Activated CD4-positive, alpha-beta memory T cell treated with anti-CD3 and anti-CD28 coated beads for 36 hours (primary cell): ENCODE measurements at regions of chr19 and their contacts with region 1.

Region 1: DNA sequence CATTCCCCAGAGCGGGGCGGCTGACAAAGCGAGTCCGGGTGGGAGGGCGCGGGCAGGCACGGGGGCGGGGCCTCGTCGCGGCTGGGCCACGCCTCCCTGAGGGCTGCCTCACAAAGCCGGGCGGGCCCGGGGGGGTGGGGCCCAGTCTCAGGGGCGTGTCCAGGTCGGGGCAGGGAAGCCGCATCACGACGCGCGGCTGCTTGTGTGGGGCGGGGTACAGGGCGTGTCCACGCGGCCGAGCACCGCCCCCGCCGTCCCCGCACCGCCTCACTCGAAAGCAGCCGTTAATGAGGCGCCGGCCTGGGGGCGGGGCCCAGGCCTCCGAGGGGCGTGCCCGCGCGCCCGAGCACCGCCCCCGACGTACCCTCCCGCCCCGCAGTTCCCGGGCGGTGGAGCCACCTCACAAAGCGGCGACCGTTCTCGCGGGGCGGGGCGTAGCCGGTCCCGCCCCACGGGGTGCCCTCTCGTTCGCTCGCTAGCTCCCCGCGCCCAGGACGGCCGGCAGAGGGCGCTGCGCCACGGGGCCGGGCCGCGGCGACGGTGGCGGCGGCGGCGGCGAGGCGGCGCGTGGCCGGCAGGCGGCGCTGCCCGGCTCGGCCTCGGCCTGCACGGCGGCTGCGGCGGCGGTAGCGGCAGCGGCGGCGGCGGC is at the start of gene CARM1:
- DNase-seq: peak; percentile 99
- H3K4me3 Mint-ChIP-seq: peak within 1 kb of the TSS; percentile 79
- H3K27ac Mint-ChIP-seq: peak within 1 kb of the TSS; percentile 96
- H3K4me1 Mint-ChIP-seq: peaks cover 25% of the 10 kb centered on the region
- H3K27me3 Mint-ChIP-seq: no peaks in the 10 kb centered on the region
- total RNA-seq, gene CARM1: 75.0 to 78.3 TPM

Region 2: DNA sequence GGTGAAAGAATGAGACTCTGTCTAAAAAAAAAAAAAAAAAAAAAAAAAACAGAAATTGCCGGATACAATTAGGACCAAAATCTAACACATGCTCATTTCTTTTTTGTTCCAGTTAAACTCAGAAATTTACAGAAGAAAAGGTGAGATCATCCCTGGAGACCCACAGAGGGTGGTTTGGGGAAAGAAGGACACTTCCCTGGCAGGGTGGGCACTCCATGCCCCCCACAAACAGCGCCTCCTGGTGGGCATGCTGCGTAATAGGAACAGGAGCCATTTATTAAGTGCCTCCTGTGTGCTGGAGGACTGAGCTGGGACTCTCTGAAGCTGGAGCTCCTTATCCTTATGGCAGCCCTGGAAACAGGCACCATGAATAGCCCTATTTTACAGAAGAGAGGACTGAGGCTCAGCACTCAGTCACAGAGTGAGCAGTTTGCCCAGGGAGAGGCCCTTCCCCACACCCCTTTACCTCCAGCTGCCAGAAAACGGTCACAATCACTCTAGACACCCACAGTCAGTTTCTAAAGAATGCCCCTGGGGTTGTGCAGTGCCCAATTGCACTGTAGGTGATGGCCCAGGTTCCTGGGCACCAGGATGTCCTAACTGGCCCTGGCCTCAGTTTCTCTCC is 12.8 kb before region 1 on chr19:
- CTCF ChIA-PET with region 1: interaction called, 21 read pairs
- POLR2A ChIA-PET with region 1: no interaction called
- intact Hi-C with region 1: no loop called
- DNase-seq: peak; percentile 47
- H3K4me3 Mint-ChIP-seq: no peak overlapping the region
- H3K27ac Mint-ChIP-seq: no peak overlapping the region
- H3K4me1 Mint-ChIP-seq: peaks cover 4% of the 10 kb centered on the region
- H3K27me3 Mint-ChIP-seq: no peaks in the 10 kb centered on the region

Region 3: GRCh38 chr19:11096210-11096841 is 225.2 kb after region 1 on chr19:
- CTCF ChIA-PET with region 1: no interaction called
- POLR2A ChIA-PET with region 1: no interaction called
- intact Hi-C with region 1: loop called (anchors 2 kb)
- DNase-seq: peak; percentile 70
- H3K4me3 Mint-ChIP-seq: peak overlapping the region; percentile 50
- H3K27ac Mint-ChIP-seq: peak overlapping the region; percentile 86
- H3K4me1 Mint-ChIP-seq: peaks cover 58% of the 10 kb centered on the region
- H3K27me3 Mint-ChIP-seq: no peaks in the 10 kb centered on the region